Activated CD4-positive, alpha-beta memory T cell treated with anti-CD3 and anti-CD28 coated beads for 36 hours (primary cell): ENCODE measurements at regions of chr2 and their contacts with region 1.

Region 1: GRCh38 chr2:10790228-10790979 is 22.2 kb downstream of the PDIA6 start:
- DNase-seq: peak; percentile 70
- H3K4me3 Mint-ChIP-seq: peak overlapping the region; percentile 54
- H3K27ac Mint-ChIP-seq: peak overlapping the region; percentile 84
- H3K4me1 Mint-ChIP-seq: peaks cover 38% of the 10 kb centered on the region
- H3K27me3 Mint-ChIP-seq: no peaks in the 10 kb centered on the region

Region 2: GRCh38 chr2:10688921-10689807 is 101.2 kb before region 1 on chr2:
- CTCF ChIA-PET with region 1: no interaction called
- POLR2A ChIA-PET with region 1: interaction called, 5 read pairs
- intact Hi-C with region 1: loop called (anchors 5 kb)
- DNase-seq: no peak
- H3K4me3 Mint-ChIP-seq: no peak overlapping the region
- H3K27ac Mint-ChIP-seq: no peak overlapping the region
- H3K4me1 Mint-ChIP-seq: peaks cover 6% of the 10 kb centered on the region
- H3K27me3 Mint-ChIP-seq: no peaks in the 10 kb centered on the region

Region 3: GRCh38 chr2:10750610-10751009 is 39.8 kb before region 1 on chr2:
- CTCF ChIA-PET with region 1: interaction called, 3 read pairs
- POLR2A ChIA-PET with region 1: interaction called, 4 read pairs
- intact Hi-C with region 1: loop called (anchors 2 kb)
- DNase-seq: no peak
- H3K4me3 Mint-ChIP-seq: no peak overlapping the region
- H3K27ac Mint-ChIP-seq: no peak overlapping the region
- H3K4me1 Mint-ChIP-seq: peaks cover 7% of the 10 kb centered on the region
- H3K27me3 Mint-ChIP-seq: no peaks in the 10 kb centered on the region

Region 4: GRCh38 chr2:10812362-10813162 is 22.2 kb after region 1 on chr2 and contains the start of gene PDIA6:
- CTCF ChIA-PET with region 1: interaction called, 3 read pairs
- POLR2A ChIA-PET with region 1: interaction called, 19 read pairs
- intact Hi-C with region 1: loop called (anchors 1 kb)
- DNase-seq: peak; percentile 97
- H3K4me3 Mint-ChIP-seq: peak within 1 kb of the TSS; percentile 88
- H3K27ac Mint-ChIP-seq: peak within 1 kb of the TSS; percentile 90
- H3K4me1 Mint-ChIP-seq: peaks cover 34% of the 10 kb centered on the region
- H3K27me3 Mint-ChIP-seq: no peaks in the 10 kb centered on the region
- total RNA-seq, gene PDIA6: 176 to 181 TPM